Mammary epithelial cell (primary cell): ENCODE measurements at regions of chr12 and their contacts with region 1.

Region 1: GRCh38 chr12:22100958-22101748 is 55.1 kb downstream of the CMAS start:
- DNase-seq: peak; percentile 73
- H3K4me3 ChIP-seq: no peak overlapping the region
- H3K27ac ChIP-seq: peak overlapping the region; percentile 46
- H3K4me1 ChIP-seq: peaks cover 16% of the 10 kb centered on the region
- H3K27me3 ChIP-seq: no peaks in the 10 kb centered on the region
- CTCF ChIP-seq: peak; percentile 53 to 77

Region 2: GRCh38 chr12:21992823-21993222 is 108.3 kb before region 1 on chr12:
- CTCF ChIA-PET with region 1: no interaction called
- dilution Hi-C with region 1: no loop called
- in situ Hi-C with region 1: no loop called
- intact Hi-C with region 1: no loop called
- DNase-seq: no peak
- H3K4me3 ChIP-seq: no peak overlapping the region
- H3K27ac ChIP-seq: no peak overlapping the region
- H3K4me1 ChIP-seq: no peaks in the 10 kb centered on the region
- H3K27me3 ChIP-seq: no peaks in the 10 kb centered on the region
- CTCF ChIP-seq: no peak

Region 3: GRCh38 chr12:22164139-22164538 is 63.0 kb after region 1 on chr12:
- CTCF ChIA-PET with region 1: no interaction called
- dilution Hi-C with region 1: no loop called
- in situ Hi-C with region 1: loop called in 1 of 2 experiments (anchors 10 kb)
- intact Hi-C with region 1: no loop called
- DNase-seq: no peak
- H3K4me3 ChIP-seq: no peak overlapping the region
- H3K27ac ChIP-seq: no peak overlapping the region
- H3K4me1 ChIP-seq: no peaks in the 10 kb centered on the region
- H3K27me3 ChIP-seq: no peaks in the 10 kb centered on the region
- CTCF ChIP-seq: no peak

Region 4: DNA sequence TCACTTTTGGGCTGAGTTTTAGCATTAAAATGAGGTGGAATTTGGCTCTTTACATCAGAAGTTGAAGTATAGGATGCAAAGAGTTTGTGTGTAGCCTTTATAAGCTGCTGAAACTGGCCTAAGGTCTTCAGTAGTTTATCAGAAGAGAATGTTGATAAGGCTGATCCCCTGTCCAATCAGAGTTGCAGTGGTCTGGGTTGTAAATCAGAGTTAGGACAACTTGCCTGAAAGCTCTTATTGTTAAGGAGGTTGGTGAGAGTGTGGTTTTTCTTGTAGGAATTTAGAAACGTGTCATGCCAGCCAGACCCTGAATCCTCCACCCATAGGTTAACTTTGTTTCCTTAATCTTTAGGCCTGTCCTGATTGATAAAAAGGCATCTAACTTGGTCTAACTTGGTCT is 89.8 kb after region 1 on chr12:
- CTCF ChIA-PET with region 1: no interaction called
- dilution Hi-C with region 1: no loop called
- in situ Hi-C with region 1: no loop called
- intact Hi-C with region 1: loop called (anchors 5 kb)
- DNase-seq: no peak
- H3K4me3 ChIP-seq: no peak overlapping the region
- H3K27ac ChIP-seq: no peak overlapping the region
- H3K4me1 ChIP-seq: no peaks in the 10 kb centered on the region
- H3K27me3 ChIP-seq: no peaks in the 10 kb centered on the region
- CTCF ChIP-seq: peak in 1 of 2 donors; percentile 22

Region 5: GRCh38 chr12:22334410-22335290 is 233.5 kb after region 1 on chr12 and contains the start of gene ST8SIA1:
- CTCF ChIA-PET with region 1: no interaction called
- dilution Hi-C with region 1: loop called (anchors 5 kb)
- in situ Hi-C with region 1: loop called (anchors 5 to 10 kb)
- intact Hi-C with region 1: loop called (anchors 1 kb)
- DNase-seq: peak; percentile 34
- H3K4me3 ChIP-seq: peak within 1 kb of the TSS; percentile 67 to 83 (median 79)
- H3K27ac ChIP-seq: peak within 1 kb of the TSS; percentile 47
- H3K4me1 ChIP-seq: peaks cover 15% of the 10 kb centered on the region
- H3K27me3 ChIP-seq: peaks cover 5% of the 10 kb centered on the region
- CTCF ChIP-seq: no peak
- total RNA-seq, gene ST8SIA1: 0.50 to 0.87 TPM

Region 6: DNA sequence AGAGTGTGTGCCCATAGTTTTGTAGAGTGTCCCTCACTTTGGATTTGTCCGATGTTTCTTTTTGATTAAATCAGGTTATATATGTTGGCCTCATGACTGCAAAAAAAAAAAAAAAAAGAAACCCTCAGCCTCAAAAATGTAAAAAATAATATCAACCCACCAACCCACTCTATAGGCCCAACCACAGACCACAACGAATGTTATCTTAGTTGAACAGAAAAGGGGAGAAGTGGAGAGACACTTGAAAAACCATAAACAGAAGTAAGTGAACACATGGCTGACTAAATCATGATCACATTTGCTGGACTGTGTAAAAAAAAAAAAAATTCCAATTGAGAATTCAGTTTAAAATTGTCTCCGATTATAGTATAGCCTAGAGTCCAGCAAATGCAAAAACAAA is 278.9 kb after region 1 on chr12:
- CTCF ChIA-PET with region 1: no interaction called
- dilution Hi-C with region 1: no loop called
- in situ Hi-C with region 1: no loop called
- intact Hi-C with region 1: no loop called
- DNase-seq: no peak
- H3K4me3 ChIP-seq: no peak overlapping the region
- H3K27ac ChIP-seq: no peak overlapping the region
- H3K4me1 ChIP-seq: no peaks in the 10 kb centered on the region
- H3K27me3 ChIP-seq: no peaks in the 10 kb centered on the region
- CTCF ChIP-seq: no peak

Region 7: GRCh38 chr12:22409377-22410164 is 308.4 kb after region 1 on chr12:
- CTCF ChIA-PET with region 1: no interaction called
- dilution Hi-C with region 1: no loop called
- in situ Hi-C with region 1: no loop called
- intact Hi-C with region 1: no loop called
- DNase-seq: no peak
- H3K4me3 ChIP-seq: no peak overlapping the region
- H3K27ac ChIP-seq: no peak overlapping the region
- H3K4me1 ChIP-seq: peaks cover 4% of the 10 kb centered on the region
- H3K27me3 ChIP-seq: no peaks in the 10 kb centered on the region
- CTCF ChIP-seq: no peak

Region 8: DNA sequence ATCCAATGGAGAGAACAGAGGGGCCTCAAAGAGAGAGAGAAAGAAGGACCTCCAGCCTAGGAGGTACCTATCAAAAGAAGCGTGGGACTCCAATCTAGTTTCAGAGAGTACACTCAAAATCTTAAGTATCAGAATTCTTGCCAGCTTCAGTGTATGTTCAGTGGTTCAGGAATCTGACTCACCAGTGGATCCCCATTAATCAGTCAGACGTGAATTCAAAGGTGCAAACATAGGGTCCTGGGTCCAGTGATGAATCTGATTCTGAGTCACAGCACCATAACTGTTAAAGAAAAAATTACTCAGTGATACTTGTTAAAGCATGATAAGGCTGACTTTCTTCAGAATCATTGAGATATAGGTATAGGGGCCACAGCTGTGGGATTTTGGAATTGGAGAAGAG is 557.1 kb after region 1 on chr12:
- CTCF ChIA-PET with region 1: no interaction called
- dilution Hi-C with region 1: no loop called
- in situ Hi-C with region 1: no loop called
- intact Hi-C with region 1: loop called (anchors 10 kb)
- DNase-seq: peak; percentile 97
- H3K4me3 ChIP-seq: no peak overlapping the region
- H3K27ac ChIP-seq: peak overlapping the region; percentile 83
- H3K4me1 ChIP-seq: peaks cover 35% of the 10 kb centered on the region
- H3K27me3 ChIP-seq: no peaks in the 10 kb centered on the region
- CTCF ChIP-seq: no peak